Activated CD4-positive, alpha-beta T cell treated with anti-CD3 and anti-CD28 coated beads for 36 hours (primary cell): ENCODE measurements at regions of chr17 and their contacts with region 1.

Region 1: GRCh38 chr17:78745407-78746088 is 36.5 kb downstream of the CYTH1 start:
- DNase-seq: peak; percentile 71
- ATAC-seq: no peak
- H3K4me3 Mint-ChIP-seq: peak overlapping the region; percentile 7
- H3K27ac Mint-ChIP-seq: peak overlapping the region; percentile 94
- H3K4me1 Mint-ChIP-seq: peaks cover 94% of the 10 kb centered on the region
- H3K27me3 Mint-ChIP-seq: no peaks in the 10 kb centered on the region

Region 2: GRCh38 chr17:78383725-78384471 is 361.6 kb before region 1 on chr17:
- CTCF ChIA-PET with region 1: interaction called, 3 read pairs
- POLR2A ChIA-PET with region 1: interaction called, 3 read pairs
- intact Hi-C with region 1: loop called in 1 of 2 experiments (anchors 5 kb)
- DNase-seq: peak; percentile 86
- ATAC-seq: peak; percentile 42
- H3K4me3 Mint-ChIP-seq: peak overlapping the region; percentile 88
- H3K27ac Mint-ChIP-seq: peak overlapping the region; percentile 98
- H3K4me1 Mint-ChIP-seq: peaks cover 89% of the 10 kb centered on the region
- H3K27me3 Mint-ChIP-seq: no peaks in the 10 kb centered on the region

Region 3: GRCh38 chr17:78708510-78708973 is 37.0 kb before region 1 on chr17:
- CTCF ChIA-PET with region 1: interaction called, 47 read pairs
- POLR2A ChIA-PET with region 1: interaction called, 4 read pairs
- intact Hi-C with region 1: loop called (anchors 2 kb)
- DNase-seq: peak; percentile 82
- ATAC-seq: peak; percentile 77
- H3K4me3 Mint-ChIP-seq: peak overlapping the region; percentile 49
- H3K27ac Mint-ChIP-seq: peak overlapping the region; percentile 86
- H3K4me1 Mint-ChIP-seq: peaks cover 67% of the 10 kb centered on the region
- H3K27me3 Mint-ChIP-seq: no peaks in the 10 kb centered on the region

Region 4: GRCh38 chr17:78723001-78723796 is 22.3 kb before region 1 on chr17:
- CTCF ChIA-PET with region 1: interaction called, 10 read pairs
- POLR2A ChIA-PET with region 1: interaction called, 13 read pairs
- intact Hi-C with region 1: loop called (anchors 1 kb)
- DNase-seq: no peak
- ATAC-seq: no peak
- H3K4me3 Mint-ChIP-seq: no peak overlapping the region
- H3K27ac Mint-ChIP-seq: peak overlapping the region; percentile 83
- H3K4me1 Mint-ChIP-seq: peaks cover 94% of the 10 kb centered on the region
- H3K27me3 Mint-ChIP-seq: no peaks in the 10 kb centered on the region

Region 5: GRCh38 chr17:78769196-78769773 is 23.7 kb after region 1 on chr17:
- CTCF ChIA-PET with region 1: interaction called, 14 read pairs
- POLR2A ChIA-PET with region 1: interaction called, 19 read pairs
- intact Hi-C with region 1: loop called in 1 of 2 experiments (anchors 1 kb)
- DNase-seq: no peak
- ATAC-seq: peak; percentile 35
- H3K4me3 Mint-ChIP-seq: no peak overlapping the region
- H3K27ac Mint-ChIP-seq: no peak overlapping the region
- H3K4me1 Mint-ChIP-seq: peaks cover 45% of the 10 kb centered on the region
- H3K27me3 Mint-ChIP-seq: no peaks in the 10 kb centered on the region

Region 6: GRCh38 chr17:78781948-78782916 is 36.7 kb after region 1 on chr17 and contains the start of gene CYTH1:
- CTCF ChIA-PET with region 1: interaction called, 7 read pairs
- POLR2A ChIA-PET with region 1: interaction called, 22 read pairs
- intact Hi-C with region 1: loop called in 1 of 2 experiments (anchors 1 kb)
- DNase-seq: peak; percentile 98
- ATAC-seq: peak; percentile 73
- H3K4me3 Mint-ChIP-seq: peak within 1 kb of the TSS; percentile 77
- H3K27ac Mint-ChIP-seq: peak within 1 kb of the TSS; percentile 97
- H3K4me1 Mint-ChIP-seq: peaks cover 54% of the 10 kb centered on the region
- H3K27me3 Mint-ChIP-seq: no peaks in the 10 kb centered on the region
- total RNA-seq, gene CYTH1: 109 to 130 TPM

Region 7: DNA sequence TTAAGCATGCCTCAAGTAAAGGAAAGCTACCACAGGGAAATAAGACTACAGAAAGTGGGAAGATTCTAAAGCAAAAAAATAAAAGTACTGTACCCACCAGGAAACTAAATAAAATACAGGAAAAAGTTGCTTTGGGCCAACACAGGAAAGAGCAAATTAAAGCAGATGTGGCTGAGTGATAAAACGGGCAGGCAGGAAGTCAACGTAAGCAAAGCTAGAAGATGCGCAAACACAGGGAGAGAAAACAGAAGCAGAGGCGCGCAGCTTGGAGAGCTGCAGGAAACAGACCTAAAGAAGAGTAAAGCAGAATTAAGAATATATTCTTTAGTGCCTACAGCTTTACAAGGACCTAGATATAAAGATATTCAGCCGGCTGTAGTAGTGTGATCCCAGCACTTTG is 73.4 kb after region 1 on chr17:
- CTCF ChIA-PET with region 1: interaction called, 4 read pairs
- POLR2A ChIA-PET with region 1: no interaction called
- intact Hi-C with region 1: loop called in 1 of 2 experiments (anchors 1 kb)
- DNase-seq: peak; percentile 64
- ATAC-seq: peak; percentile 28
- H3K4me3 Mint-ChIP-seq: peak overlapping the region; percentile 30
- H3K27ac Mint-ChIP-seq: peak overlapping the region; percentile 90
- H3K4me1 Mint-ChIP-seq: peaks cover 66% of the 10 kb centered on the region
- H3K27me3 Mint-ChIP-seq: no peaks in the 10 kb centered on the region